ENCODE measurements at regions of chr12 and their contacts with region 1.

Region 1: GRCh38 chr12:100375038-100375735 is 18.3 kb downstream of the SLC17A8 start:
- DNase-seq: no peak
- H3K4me3 ChIP-seq: no peak overlapping the region
- H3K4me3 Mint-ChIP-seq: no peak overlapping the region
- H3K27ac Mint-ChIP-seq: no peak overlapping the region
- H3K4me1 ChIP-seq: no peaks in the 10 kb centered on the region
- H3K4me1 Mint-ChIP-seq: no peaks in the 10 kb centered on the region
- H3K27me3 ChIP-seq: no peaks in the 10 kb centered on the region
- H3K27me3 Mint-ChIP-seq: no peaks in the 10 kb centered on the region
- CTCF ChIP-seq: no peak

Region 2: GRCh38 chr12:100329800-100330199 is 45.4 kb before region 1 on chr12:
- CTCF ChIA-PET with region 1: no interaction called
- POLR2A ChIA-PET with region 1: no interaction called
- intact Hi-C with region 1: no loop called
- DNase-seq: no peak
- H3K4me3 ChIP-seq: no peak overlapping the region
- H3K4me3 Mint-ChIP-seq: no peak overlapping the region
- H3K27ac Mint-ChIP-seq: no peak overlapping the region
- H3K4me1 ChIP-seq: no peaks in the 10 kb centered on the region
- H3K4me1 Mint-ChIP-seq: no peaks in the 10 kb centered on the region
- H3K27me3 ChIP-seq: no peaks in the 10 kb centered on the region
- H3K27me3 Mint-ChIP-seq: no peaks in the 10 kb centered on the region
- CTCF ChIP-seq: no peak

Region 3: DNA sequence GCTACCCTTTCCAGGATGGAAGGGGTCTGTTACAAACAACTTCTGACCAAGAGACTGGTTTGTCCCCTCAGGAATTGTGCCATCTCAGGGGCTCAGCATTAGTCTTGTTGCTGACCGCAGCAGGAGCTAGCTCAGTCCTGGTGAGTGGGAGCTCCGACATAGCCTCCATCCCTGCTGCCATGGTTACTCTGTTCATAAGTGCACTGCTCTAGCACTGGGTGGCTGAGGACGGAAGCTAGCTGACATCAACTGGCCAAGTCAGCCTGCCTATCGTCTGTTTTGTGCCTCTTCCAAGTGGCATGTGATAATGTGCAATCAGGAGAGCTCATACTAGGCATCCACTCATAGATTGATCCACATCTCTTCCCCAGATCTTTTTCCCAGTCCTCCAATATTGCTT is 10.9 kb before region 1 on chr12:
- CTCF ChIA-PET with region 1: interaction called, 11 read pairs
- POLR2A ChIA-PET with region 1: no interaction called
- intact Hi-C with region 1: no loop called
- DNase-seq: no peak
- H3K4me3 ChIP-seq: no peak overlapping the region
- H3K4me3 Mint-ChIP-seq: no peak overlapping the region
- H3K27ac Mint-ChIP-seq: no peak overlapping the region
- H3K4me1 ChIP-seq: no peaks in the 10 kb centered on the region
- H3K4me1 Mint-ChIP-seq: no peaks in the 10 kb centered on the region
- H3K27me3 ChIP-seq: no peaks in the 10 kb centered on the region; the same call in 1 of the 2 replicates
- H3K27me3 Mint-ChIP-seq: peaks cover 15% of the 10 kb centered on the region
- CTCF ChIP-seq: no peak

Measured in Caco-2 (cell line).